CD14-positive monocyte (primary cell): ENCODE measurements at regions of chr10 and their contacts with region 1.

Region 1: DNA sequence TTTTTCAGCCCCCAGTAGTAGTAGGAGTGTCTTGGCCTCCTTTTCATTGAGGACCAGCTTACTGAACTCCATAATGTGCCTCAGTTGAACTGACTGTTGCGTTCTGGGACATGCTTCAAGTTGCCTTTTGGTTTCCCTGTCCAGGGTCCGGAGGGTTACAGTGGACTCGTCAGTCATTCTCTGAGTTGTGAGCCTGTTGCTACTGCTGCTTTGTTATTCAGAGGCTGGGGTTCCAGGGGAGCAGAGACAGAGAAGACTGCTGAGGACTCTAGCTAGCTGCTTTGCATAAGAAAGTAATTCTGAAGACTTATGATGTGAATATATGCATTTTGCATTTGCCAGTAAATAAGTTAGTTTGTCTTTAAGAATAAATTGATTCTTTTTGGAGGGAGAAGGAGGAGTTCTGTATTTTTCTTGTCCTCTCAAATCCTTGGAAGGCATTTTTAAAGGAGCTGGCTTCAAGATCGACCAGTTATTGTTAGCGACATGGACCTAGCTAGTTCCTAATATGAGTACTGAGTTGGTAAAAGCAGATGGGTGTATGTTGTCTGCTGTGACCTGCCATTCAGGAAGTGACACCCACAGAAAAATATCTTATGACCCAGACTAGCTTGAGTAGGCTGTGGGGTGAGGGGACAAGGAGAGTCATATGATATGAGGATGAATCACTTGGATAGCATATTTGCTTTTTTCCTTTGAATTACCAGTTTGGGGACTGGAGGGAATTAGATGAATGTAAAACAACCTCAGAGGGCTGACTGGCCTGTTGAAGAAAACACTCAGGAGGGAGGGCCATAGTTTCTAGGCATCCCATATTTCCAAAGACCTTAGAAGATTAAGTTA is 8.3 kb downstream of the PI4K2A start:
- DNase-seq: peak; percentile 86 to 93 (median 87)
- H3K4me3 ChIP-seq: peak overlapping the region in 1 of 3 experiments; percentile 40
- H3K4me3 Mint-ChIP-seq: peak overlapping the region; percentile 28 to 45
- H3K27ac ChIP-seq: peak overlapping the region; percentile 50 to 96
- H3K27ac Mint-ChIP-seq: peak overlapping the region; percentile 89 to 97 (median 95)
- H3K4me1 ChIP-seq: peaks cover 41 to 42% of the 10 kb centered on the region in 2 donors
- H3K4me1 Mint-ChIP-seq: peaks cover 47% of the 10 kb centered on the region
- H3K27me3 ChIP-seq: no peaks in the 10 kb centered on the region
- H3K27me3 Mint-ChIP-seq: no peaks in the 10 kb centered on the region
- CTCF ChIP-seq: no peak

Region 2: GRCh38 chr10:97543025-97543575 is 105.7 kb before region 1 on chr10:
- intact Hi-C with region 1: loop called in 1 of 2 experiments (anchors 5 kb)
- DNase-seq: peak; percentile 88 to 96 (median 96)
- H3K4me3 ChIP-seq: peak overlapping the region in 1 of 3 experiments; percentile 61
- H3K4me3 Mint-ChIP-seq: peak overlapping the region; percentile 24 to 87
- H3K27ac ChIP-seq: peak overlapping the region; percentile 71 to 95
- H3K27ac Mint-ChIP-seq: peak overlapping the region; percentile 88 to 97 (median 94)
- H3K4me1 ChIP-seq: peaks cover 29 to 46% of the 10 kb centered on the region in 2 donors
- H3K4me1 Mint-ChIP-seq: peaks cover 33% of the 10 kb centered on the region
- H3K27me3 ChIP-seq: no peaks in the 10 kb centered on the region
- H3K27me3 Mint-ChIP-seq: peaks cover 0 to 1% (median 0%) of the 10 kb centered on the region in 3 donors
- CTCF ChIP-seq: no peak